Naive thymus-derived CD4-positive, alpha-beta T cell (primary cell): ENCODE measurements at regions of chr11 and their contacts with region 1.

Region 1: DNA sequence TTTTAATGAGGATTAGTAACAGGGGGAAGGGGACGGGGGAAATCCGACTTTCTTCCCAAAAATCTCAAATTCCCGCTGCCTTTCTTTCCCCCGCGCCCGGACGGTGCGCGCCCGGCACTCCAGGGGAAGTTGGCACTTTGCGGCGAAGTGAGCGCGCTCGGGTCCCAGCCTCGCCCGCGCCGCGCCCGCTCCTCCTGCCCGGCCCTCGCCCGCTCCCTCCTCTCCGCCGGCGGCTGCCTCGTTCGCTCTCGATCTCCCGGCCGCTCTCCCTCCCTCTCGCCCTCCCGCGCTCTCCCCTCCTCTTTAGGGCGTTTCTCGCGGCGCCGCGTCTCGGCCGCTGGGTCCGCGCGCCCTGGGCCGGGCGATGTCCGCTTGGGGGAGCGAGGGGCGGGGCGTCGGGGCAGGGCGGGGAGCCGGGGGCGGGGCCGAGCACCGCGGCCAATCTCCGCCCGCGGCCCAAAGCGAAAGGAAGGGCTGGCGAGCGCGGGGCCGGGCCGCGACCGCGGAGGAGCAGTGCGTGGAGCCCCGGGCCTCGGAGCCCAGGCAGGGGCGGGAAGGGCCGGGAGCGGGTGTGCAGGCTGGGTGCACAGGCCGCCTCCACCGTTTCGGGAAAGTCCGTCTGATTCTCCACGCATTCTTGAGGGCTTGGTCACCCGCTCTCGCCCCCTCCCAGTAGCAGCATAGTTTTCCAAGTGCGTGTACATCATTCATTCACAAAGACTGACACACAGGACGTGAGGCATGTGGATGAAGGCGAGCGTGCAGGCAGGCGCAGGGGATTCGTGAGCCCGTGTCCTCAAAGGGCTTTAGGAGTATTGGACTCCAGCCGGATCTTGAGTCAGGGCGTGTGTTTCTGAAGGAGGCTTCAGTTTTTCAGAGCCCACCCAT is 65.1 kb downstream of the ETS1 start:
- DNase-seq: peak; percentile 67 to 95 (median 84)
- ATAC-seq: peak; percentile 87
- H3K4me3 ChIP-seq: peak overlapping the region; percentile 96
- H3K4me3 Mint-ChIP-seq: peak overlapping the region; percentile 94 to 100 (median 98)
- H3K27ac ChIP-seq: peak overlapping the region; percentile 97
- H3K27ac Mint-ChIP-seq: peak overlapping the region; percentile 94 to 99 (median 98)
- H3K4me1 ChIP-seq: peaks cover 36 to 43% of the 10 kb centered on the region in 2 donors
- H3K4me1 Mint-ChIP-seq: peaks cover 35 to 52% (median 45%) of the 10 kb centered on the region in 7 donors
- H3K27me3 ChIP-seq: no peaks in the 10 kb centered on the region
- H3K27me3 Mint-ChIP-seq: peaks cover 0 to 3% (median 0%) of the 10 kb centered on the region in 5 donors

Region 2: GRCh38 chr11:128039140-128040021 is 482.9 kb before region 1 on chr11:
- CTCF ChIA-PET with region 1: no interaction called
- POLR2A ChIA-PET with region 1: interaction called, 3 read pairs
- intact Hi-C with region 1: loop called in 1 of 2 experiments (anchors 1 kb)
- DNase-seq: peak; percentile 25 to 83 (median 74)
- ATAC-seq: peak; percentile 97
- H3K4me3 ChIP-seq: peak overlapping the region; percentile 38
- H3K4me3 Mint-ChIP-seq: peak overlapping the region in 9 of 10 donors; percentile 61 to 79 (median 70)
- H3K27ac ChIP-seq: peak overlapping the region; percentile 49
- H3K27ac Mint-ChIP-seq: peak overlapping the region in 8 of 9 donors; percentile 71 to 94 (median 90)
- H3K4me1 ChIP-seq: peaks cover 68 to 74% of the 10 kb centered on the region in 2 donors
- H3K4me1 Mint-ChIP-seq: peaks cover 25 to 56% (median 41%) of the 10 kb centered on the region in 7 donors
- H3K27me3 ChIP-seq: no peaks in the 10 kb centered on the region
- H3K27me3 Mint-ChIP-seq: peaks cover 0 to 3% (median 0%) of the 10 kb centered on the region in 5 donors

Region 3: DNA sequence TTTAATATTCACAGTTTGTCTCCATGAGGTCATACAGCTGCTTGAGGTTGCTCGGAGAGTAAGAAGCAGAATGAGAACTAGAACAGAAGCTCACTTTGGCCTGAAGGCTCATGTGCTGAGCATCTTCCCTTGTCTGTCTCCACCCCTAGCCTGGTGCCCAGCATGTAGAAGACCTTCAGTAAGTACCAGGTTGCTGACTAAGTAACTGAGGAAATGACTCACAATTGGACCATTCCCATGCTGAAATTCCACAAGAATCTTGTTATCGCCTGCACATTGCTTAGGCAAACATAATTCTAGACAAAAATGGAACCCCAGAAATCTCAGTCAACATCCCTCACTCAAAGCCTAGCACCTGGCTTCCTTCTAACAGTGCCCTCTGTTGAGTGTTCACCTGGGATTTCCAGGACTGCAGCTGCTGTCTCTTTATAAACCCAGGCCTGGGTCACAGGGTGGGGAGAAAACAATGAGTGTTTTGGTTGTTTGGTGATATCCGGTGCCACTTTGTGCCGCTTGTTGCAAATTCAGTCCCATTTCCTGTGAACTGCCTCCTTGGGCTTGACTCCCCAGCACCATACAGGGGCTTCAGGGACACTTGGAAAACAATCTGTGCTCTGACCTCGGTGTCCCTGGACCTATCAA is 341.7 kb before region 1 on chr11:
- CTCF ChIA-PET with region 1: no interaction called
- POLR2A ChIA-PET with region 1: no interaction called
- intact Hi-C with region 1: no loop called
- DNase-seq: no peak
- ATAC-seq: no peak
- H3K4me3 ChIP-seq: no peak overlapping the region
- H3K4me3 Mint-ChIP-seq: no peak overlapping the region
- H3K27ac ChIP-seq: no peak overlapping the region
- H3K27ac Mint-ChIP-seq: peak overlapping the region in 1 of 9 donors; percentile 21
- H3K4me1 ChIP-seq: no peaks in the 10 kb centered on the region
- H3K4me1 Mint-ChIP-seq: peaks cover 0 to 12% (median 0%) of the 10 kb centered on the region in 7 donors
- H3K27me3 ChIP-seq: no peaks in the 10 kb centered on the region
- H3K27me3 Mint-ChIP-seq: peaks cover 0 to 4% (median 0%) of the 10 kb centered on the region in 5 donors

Region 4: DNA sequence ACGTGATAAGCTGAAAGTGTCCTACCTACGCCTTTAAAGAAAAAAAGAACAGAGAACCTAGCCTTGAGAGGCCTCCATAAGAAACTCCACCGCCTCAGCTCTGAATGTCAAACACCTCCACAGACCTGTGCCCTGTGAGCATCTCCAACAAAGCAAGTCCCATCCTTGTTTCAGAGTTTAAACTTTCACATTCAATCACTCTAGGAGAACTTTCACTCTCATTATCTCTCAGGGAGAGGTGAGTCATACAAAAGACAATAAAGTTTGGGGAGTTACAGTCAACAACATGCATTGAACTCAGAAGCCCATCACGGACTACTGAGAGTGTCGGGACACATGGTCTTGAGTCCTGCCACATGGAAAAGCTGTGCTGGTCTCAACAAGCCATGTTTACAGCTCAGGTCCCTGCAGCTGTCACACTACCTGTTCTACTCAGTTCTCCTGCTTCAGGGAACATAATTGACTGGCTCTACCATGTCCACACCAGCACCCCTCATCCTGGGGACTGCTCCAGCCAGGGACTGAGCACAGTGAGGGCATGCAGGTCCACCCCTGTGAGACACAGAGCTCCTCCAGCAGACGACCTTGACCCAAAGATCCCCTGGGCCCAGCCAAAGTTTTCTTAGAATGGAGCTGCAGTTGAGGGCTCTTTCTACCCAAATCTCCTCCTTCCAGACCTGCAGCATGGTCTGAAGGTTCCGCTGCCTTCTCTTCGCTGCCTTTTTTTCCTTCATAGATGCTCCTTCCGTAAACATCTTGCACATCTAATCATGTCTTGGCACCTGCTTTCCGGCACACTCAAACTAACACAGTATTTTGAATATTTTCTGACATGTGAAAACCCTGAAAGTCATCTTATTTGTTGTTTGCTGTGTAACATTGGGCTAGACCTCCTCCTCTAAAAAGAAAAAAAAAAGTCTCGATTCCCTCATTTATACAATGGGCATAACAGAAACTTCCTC is 49.9 kb before region 1 on chr11:
- CTCF ChIA-PET with region 1: interaction called, 11 read pairs
- POLR2A ChIA-PET with region 1: interaction called, 155 read pairs
- intact Hi-C with region 1: loop called (anchors 1 kb)
- DNase-seq: peak in 5 of 9 donors; percentile 38 to 77 (median 57)
- ATAC-seq: peak; percentile 17
- H3K4me3 ChIP-seq: peak overlapping the region; percentile 63
- H3K4me3 Mint-ChIP-seq: peak overlapping the region; percentile 73 to 99 (median 82)
- H3K27ac ChIP-seq: peak overlapping the region; percentile 97
- H3K27ac Mint-ChIP-seq: peak overlapping the region; percentile 92 to 100 (median 98)
- H3K4me1 ChIP-seq: peaks cover 98 to 100% of the 10 kb centered on the region in 2 donors
- H3K4me1 Mint-ChIP-seq: peaks cover 76 to 100% (median 98%) of the 10 kb centered on the region in 7 donors
- H3K27me3 ChIP-seq: no peaks in the 10 kb centered on the region
- H3K27me3 Mint-ChIP-seq: no peaks in the 10 kb centered on the region

Region 5: GRCh38 chr11:128506999-128507611 is 15.2 kb before region 1 on chr11:
- CTCF ChIA-PET with region 1: interaction called, 8 read pairs
- POLR2A ChIA-PET with region 1: interaction called, 600 read pairs
- intact Hi-C with region 1: loop called (anchors 1 kb)
- DNase-seq: peak in 1 of 9 donors; percentile 60
- ATAC-seq: no peak
- H3K4me3 ChIP-seq: peak overlapping the region; percentile 96
- H3K4me3 Mint-ChIP-seq: peak overlapping the region; percentile 85 to 100 (median 98)
- H3K27ac ChIP-seq: peak overlapping the region; percentile 97
- H3K27ac Mint-ChIP-seq: peak overlapping the region; percentile 87 to 99 (median 97)
- H3K4me1 ChIP-seq: peaks cover 89 to 91% of the 10 kb centered on the region in 2 donors
- H3K4me1 Mint-ChIP-seq: peaks cover 70 to 98% (median 92%) of the 10 kb centered on the region in 7 donors
- H3K27me3 ChIP-seq: no peaks in the 10 kb centered on the region
- H3K27me3 Mint-ChIP-seq: no peaks in the 10 kb centered on the region

Region 6: GRCh38 chr11:128610721-128611617 is 88.7 kb after region 1 on chr11:
- CTCF ChIA-PET with region 1: interaction called, 3 read pairs
- POLR2A ChIA-PET with region 1: interaction called, 546 read pairs
- intact Hi-C with region 1: loop called in 1 of 2 experiments (anchors 1 kb)
- DNase-seq: peak; percentile 34 to 76 (median 62)
- ATAC-seq: peak; percentile 91
- H3K4me3 ChIP-seq: peak overlapping the region; percentile 11
- H3K4me3 Mint-ChIP-seq: peak overlapping the region; percentile 57 to 85 (median 76)
- H3K27ac ChIP-seq: peak overlapping the region; percentile 76
- H3K27ac Mint-ChIP-seq: peak overlapping the region; percentile 87 to 99 (median 95)
- H3K4me1 ChIP-seq: peaks cover 21 to 58% of the 10 kb centered on the region in 2 donors
- H3K4me1 Mint-ChIP-seq: peaks cover 31 to 88% (median 76%) of the 10 kb centered on the region in 7 donors
- H3K27me3 ChIP-seq: no peaks in the 10 kb centered on the region
- H3K27me3 Mint-ChIP-seq: no peaks in the 10 kb centered on the region

Region 7: DNA sequence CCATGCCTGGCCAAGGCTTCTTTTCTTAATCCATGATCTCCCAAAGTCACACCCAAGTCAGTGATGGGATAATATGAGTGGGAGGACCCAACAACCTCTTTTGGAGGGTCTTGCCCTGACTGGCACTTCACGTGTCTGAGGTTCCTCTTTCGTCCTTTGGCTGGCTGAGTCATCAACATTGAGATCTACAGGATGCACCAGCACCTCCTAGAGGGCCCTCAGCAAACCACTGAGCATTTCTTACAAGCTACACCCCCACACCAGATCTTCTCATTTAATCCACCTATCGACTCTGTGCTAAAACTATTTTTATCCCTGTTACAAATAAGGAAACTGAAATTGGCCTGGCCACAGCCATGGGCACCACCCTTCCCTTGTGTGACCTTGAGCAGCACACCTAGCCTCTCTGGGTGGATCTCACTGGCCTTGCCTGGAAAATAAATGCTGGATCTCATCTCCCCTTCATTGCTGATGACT is 235.0 kb after region 1 on chr11:
- CTCF ChIA-PET with region 1: interaction called, 4 read pairs
- POLR2A ChIA-PET with region 1: interaction called, 4 read pairs
- intact Hi-C with region 1: loop called (anchors 2 to 5 kb)
- DNase-seq: peak; percentile 27 to 74 (median 61)
- ATAC-seq: peak; percentile 96
- H3K4me3 ChIP-seq: no peak overlapping the region
- H3K4me3 Mint-ChIP-seq: peak overlapping the region in 8 of 10 donors; percentile 9 to 62 (median 40)
- H3K27ac ChIP-seq: no peak overlapping the region
- H3K27ac Mint-ChIP-seq: peak overlapping the region; percentile 43 to 92 (median 84)
- H3K4me1 ChIP-seq: peaks cover 36 to 49% of the 10 kb centered on the region in 2 donors
- H3K4me1 Mint-ChIP-seq: peaks cover 70 to 96% (median 89%) of the 10 kb centered on the region in 7 donors
- H3K27me3 ChIP-seq: no peaks in the 10 kb centered on the region
- H3K27me3 Mint-ChIP-seq: no peaks in the 10 kb centered on the region